ENCODE measurements at regions of chr15 and their contacts with region 1.

Region 1: GRCh38 chr15:83380682-83381081 is 66.5 kb upstream of the SH3GL3 start:
- DNase-seq: peak in 1 of 2 donors; percentile 53
- H3K4me3 ChIP-seq: no peak overlapping the region
- CTCF ChIP-seq: no peak
- POLR2A ChIP-seq: no peak

Region 2: GRCh38 chr15:83108266-83109226 is 272.1 kb before region 1 on chr15:
- intact Hi-C with region 1: no loop called
- DNase-seq: peak; percentile 53 to 87
- H3K4me3 ChIP-seq: no peak overlapping the region
- CTCF ChIP-seq: no peak
- POLR2A ChIP-seq: no peak

Region 3: GRCh38 chr15:83248151-83249029 is 132.3 kb before region 1 on chr15:
- intact Hi-C with region 1: loop called (anchors 2 kb)
- DNase-seq: peak in 1 of 2 donors; percentile 39
- H3K4me3 ChIP-seq: no peak overlapping the region
- CTCF ChIP-seq: peak in 2 of 3 donors; percentile 44 to 70
- POLR2A ChIP-seq: no peak

Measured in lower leg skin (tissue), 4 donors.